ENCODE measurements at regions of chr2 and their contacts with region 1.

Region 1: DNA sequence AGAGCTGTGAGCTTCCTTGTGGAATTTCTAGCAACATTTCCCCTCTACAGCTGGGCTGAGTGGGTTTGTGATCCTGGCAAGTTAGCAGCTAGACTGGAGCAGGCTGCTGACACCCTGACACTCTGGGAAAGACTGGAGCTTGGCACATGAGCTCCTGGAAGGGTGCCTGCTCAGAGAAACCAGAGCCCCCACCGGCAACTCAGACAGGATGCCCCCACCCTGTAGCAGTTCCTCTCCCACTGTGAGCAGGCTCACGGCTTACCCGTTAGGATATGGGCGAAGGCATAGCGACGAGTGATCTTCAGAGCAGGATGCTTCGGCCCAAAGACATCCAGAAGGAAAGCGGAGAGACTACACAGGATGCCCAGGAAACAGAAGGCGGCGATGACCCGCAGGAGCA is 11.2 kb downstream of the TMEM127 start:
- DNase-seq: no peak
- ATAC-seq: no peak
- H3K4me3 Mint-ChIP-seq: no peak overlapping the region
- H3K27ac Mint-ChIP-seq: no peak overlapping the region
- H3K4me1 Mint-ChIP-seq: peaks cover 65% of the 10 kb centered on the region
- H3K27me3 Mint-ChIP-seq: no peaks in the 10 kb centered on the region

Region 2: GRCh38 chr2:96265840-96266679 is 11.5 kb after region 1 on chr2 and contains the starts of genes CIAO1 and TMEM127:
- CTCF ChIA-PET with region 1: interaction called, 26 read pairs
- POLR2A ChIA-PET with region 1: no interaction called
- DNase-seq: peak; percentile 99
- ATAC-seq: peak; percentile 94
- H3K4me3 Mint-ChIP-seq: peak within 1 kb of the TSS; percentile 97
- H3K27ac Mint-ChIP-seq: peak within 1 kb of the TSS; percentile 91
- H3K4me1 Mint-ChIP-seq: peaks cover 52% of the 10 kb centered on the region
- H3K27me3 Mint-ChIP-seq: no peaks in the 10 kb centered on the region
- total RNA-seq, gene CIAO1: 64.9 to 65.9 TPM
- total RNA-seq, gene TMEM127: 31.8 to 34.2 TPM

Region 3: DNA sequence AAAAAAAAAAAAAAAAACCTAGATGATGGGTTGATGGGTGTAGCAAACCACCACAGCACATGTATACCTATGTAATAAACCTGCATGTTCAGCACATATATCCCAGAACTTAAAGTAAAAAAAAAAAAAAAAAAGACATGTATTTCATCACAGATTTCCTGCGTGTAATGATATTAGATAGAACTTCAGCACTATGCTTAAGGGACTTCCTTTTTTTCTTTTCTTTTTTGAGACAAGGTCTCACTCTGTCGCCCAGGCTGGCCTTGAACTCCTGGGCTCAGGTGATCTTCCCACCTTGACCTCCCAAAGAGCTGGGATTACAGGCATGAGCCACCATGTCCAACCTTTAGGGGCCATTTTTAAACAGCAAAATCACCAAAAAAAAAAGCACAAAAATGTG is 208.5 kb after region 1 on chr2:
- CTCF ChIA-PET with region 1: no interaction called
- POLR2A ChIA-PET with region 1: no interaction called
- DNase-seq: no peak
- ATAC-seq: no peak
- H3K4me3 Mint-ChIP-seq: no peak overlapping the region
- H3K27ac Mint-ChIP-seq: no peak overlapping the region
- H3K4me1 Mint-ChIP-seq: no peaks in the 10 kb centered on the region
- H3K27me3 Mint-ChIP-seq: peaks cover 7% of the 10 kb centered on the region